ENCODE measurements at regions of chr2 and their contacts with region 1.

Region 1: DNA sequence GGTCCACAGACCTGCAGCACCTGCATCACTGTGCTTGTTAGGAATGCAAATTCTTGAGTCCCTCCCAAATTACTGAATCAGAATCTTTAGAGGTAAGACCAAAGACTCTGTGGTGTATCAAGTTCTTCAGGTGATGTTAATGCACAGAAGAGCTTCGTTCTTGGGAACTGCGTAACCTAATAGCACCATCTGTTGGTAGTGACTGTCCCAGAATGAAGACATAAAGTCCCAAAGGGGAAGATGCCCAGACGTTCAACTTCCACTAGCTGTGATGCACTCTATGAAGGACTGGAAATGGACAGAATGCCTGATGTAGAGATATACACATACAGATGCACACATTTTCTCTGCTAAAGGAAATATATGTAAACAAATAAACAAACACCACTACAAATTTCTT is 576.0 kb downstream of the LRP1B start:
- DNase-seq: no peak
- ATAC-seq: peak; percentile 76
- H3K4me3 ChIP-seq: no peak overlapping the region
- H3K27ac ChIP-seq: no peak overlapping the region
- H3K4me1 ChIP-seq: no peaks in the 10 kb centered on the region
- H3K27me3 ChIP-seq: no peaks in the 10 kb centered on the region; a peak in 1 of 4 replicates
- CTCF ChIP-seq: peak; percentile 54 to 70 (median 60); a peak in 5 of 6 replicates
- EP300 ChIP-seq: no peak
- POLR2A ChIP-seq: no peak
- RAD21 ChIP-seq: peak; percentile 94

Region 2: DNA sequence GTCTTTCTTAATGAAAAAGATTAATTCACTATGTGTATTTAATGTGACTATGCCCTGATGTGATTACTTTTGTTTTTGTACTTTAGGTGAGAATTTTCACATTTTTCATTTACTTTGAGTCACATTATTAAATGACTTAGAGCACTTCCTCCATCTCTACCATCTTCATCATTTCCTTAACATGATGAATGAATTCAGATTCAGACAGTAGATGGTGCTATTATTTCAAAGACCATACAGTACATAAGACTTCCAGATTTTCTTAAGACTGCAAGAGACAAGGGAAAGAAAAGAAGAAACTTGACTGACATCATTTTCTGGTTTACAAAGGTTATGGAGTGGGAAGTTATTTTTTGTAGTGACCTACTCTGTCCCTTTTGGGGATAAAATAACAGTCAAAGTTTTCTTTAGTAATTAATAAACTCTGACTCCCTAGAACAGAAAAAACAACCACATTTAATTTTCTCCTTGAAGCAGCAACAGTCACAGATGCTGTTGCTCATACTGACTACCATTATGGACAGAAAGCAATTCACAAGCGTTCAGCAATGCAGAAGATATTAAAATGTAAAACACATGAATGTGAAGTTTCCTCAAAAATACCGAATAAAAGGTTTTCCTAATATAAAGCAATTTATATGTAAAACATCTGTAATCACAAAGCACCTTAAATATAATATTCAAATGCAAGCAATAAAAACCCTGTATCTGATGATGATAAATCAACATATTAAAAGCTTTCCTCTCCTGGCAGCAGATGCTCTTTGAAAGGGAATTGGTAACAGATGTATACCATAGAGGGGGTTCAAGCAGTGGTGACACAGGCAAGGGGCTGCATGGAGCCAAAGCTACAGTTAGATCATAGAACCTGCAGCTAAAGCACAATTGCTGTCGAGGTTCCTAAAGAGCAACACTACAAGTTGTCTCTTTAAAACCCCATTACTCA is 1763.7 kb before region 1 on chr2:
- CTCF ChIA-PET with region 1: no interaction called
- POLR2A ChIA-PET with region 1: no interaction called
- RAD21 ChIA-PET with region 1: no interaction called
- SMC1A ChIA-PET with region 1: no interaction called
- in situ Hi-C with region 1: no loop called
- intact Hi-C with region 1: loop called (anchors 10 kb)
- DNase-seq: no peak
- ATAC-seq: peak; percentile 62
- H3K4me3 ChIP-seq: no peak overlapping the region
- H3K27ac ChIP-seq: no peak overlapping the region
- H3K4me1 ChIP-seq: no peaks in the 10 kb centered on the region
- H3K27me3 ChIP-seq: no peaks in the 10 kb centered on the region
- CTCF ChIP-seq: peak in 2 of 3 experiments; percentile 16 to 42; a peak in 1 of 6 replicates
- EP300 ChIP-seq: no peak
- POLR2A ChIP-seq: no peak
- RAD21 ChIP-seq: peak; percentile 38; the same call in 1 of the 2 replicates

Region 3: DNA sequence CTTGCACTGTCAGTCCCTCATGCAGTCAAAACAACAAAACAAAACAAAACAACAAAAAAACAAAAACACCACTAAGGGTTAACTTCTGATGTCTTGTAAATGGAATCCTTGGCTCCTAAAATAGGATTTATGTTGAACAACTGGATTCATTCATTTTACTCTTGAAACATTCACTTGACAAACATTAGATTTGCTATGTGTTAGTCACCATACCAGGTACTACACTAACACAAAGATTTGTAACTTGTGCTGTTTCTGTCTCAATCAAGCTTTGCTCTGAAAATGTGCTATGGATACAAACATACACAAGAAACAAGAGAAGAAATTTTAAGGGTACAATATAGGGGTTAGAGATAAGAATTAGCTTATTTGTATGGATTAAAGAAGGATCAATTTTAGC is 236.8 kb before region 1 on chr2:
- CTCF ChIA-PET with region 1: no interaction called
- POLR2A ChIA-PET with region 1: no interaction called
- RAD21 ChIA-PET with region 1: no interaction called
- SMC1A ChIA-PET with region 1: no interaction called
- in situ Hi-C with region 1: no loop called
- intact Hi-C with region 1: loop called (anchors 10 kb)
- DNase-seq: no peak
- ATAC-seq: no peak
- H3K4me3 ChIP-seq: no peak overlapping the region
- H3K27ac ChIP-seq: no peak overlapping the region
- H3K4me1 ChIP-seq: no peaks in the 10 kb centered on the region
- H3K27me3 ChIP-seq: no peaks in the 10 kb centered on the region
- CTCF ChIP-seq: no peak
- EP300 ChIP-seq: no peak
- POLR2A ChIP-seq: no peak
- RAD21 ChIP-seq: no peak

Region 4: GRCh38 chr2:141748616-141749015 is 193.8 kb after region 1 on chr2:
- CTCF ChIA-PET with region 1: no interaction called
- POLR2A ChIA-PET with region 1: no interaction called
- RAD21 ChIA-PET with region 1: no interaction called
- SMC1A ChIA-PET with region 1: no interaction called
- in situ Hi-C with region 1: no loop called
- intact Hi-C with region 1: no loop called
- DNase-seq: no peak
- ATAC-seq: no peak
- H3K4me3 ChIP-seq: no peak overlapping the region
- H3K27ac ChIP-seq: no peak overlapping the region
- H3K4me1 ChIP-seq: no peaks in the 10 kb centered on the region
- H3K27me3 ChIP-seq: no peaks in the 10 kb centered on the region
- CTCF ChIP-seq: no peak
- EP300 ChIP-seq: no peak
- POLR2A ChIP-seq: no peak
- RAD21 ChIP-seq: no peak

Measured in GM12878 (cell line).